Breast epithelium (tissue), 4 donors: ENCODE measurements at regions of chr16 and their contacts with region 1.

Region 1: GRCh38 chr16:49116873-49117272 is 164.8 kb downstream of the CBLN1 start:
- DNase-seq: no peak
- H3K4me3 ChIP-seq: no peak overlapping the region
- H3K27ac ChIP-seq: no peak overlapping the region
- H3K4me1 ChIP-seq: no peaks in the 10 kb centered on the region
- H3K27me3 ChIP-seq: no peaks in the 10 kb centered on the region
- CTCF ChIP-seq: no peak
- POLR2A ChIP-seq: no peak

Region 2: DNA sequence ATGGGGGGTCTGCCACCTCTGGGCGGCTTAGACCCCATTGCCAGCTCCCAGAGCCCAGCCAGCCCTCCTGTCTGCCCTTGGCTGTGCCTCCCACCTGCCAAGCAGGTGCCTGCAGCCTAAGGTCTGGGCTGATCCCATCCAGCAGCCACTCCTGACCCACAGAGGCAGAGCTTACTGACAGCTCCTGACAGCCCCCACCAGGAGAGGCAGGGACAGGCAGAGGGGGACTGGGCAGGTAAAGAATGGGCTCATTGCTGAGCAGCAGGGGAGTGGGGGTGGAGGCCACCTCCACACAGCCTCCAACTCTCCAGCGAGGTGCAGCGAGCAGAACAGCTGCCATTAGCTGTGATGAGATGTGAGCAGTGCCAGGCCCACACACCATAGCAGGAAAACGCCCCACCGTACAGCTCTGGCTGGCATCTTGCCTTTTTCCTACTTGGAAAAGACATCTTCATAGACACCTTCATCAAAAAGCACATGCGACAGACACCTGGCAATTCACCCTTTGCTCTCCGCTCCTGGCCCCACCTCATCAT is 421.1 kb after region 1 on chr16:
- intact Hi-C with region 1: loop called (anchors 5 kb)
- DNase-seq: no peak
- H3K4me3 ChIP-seq: no peak overlapping the region
- H3K27ac ChIP-seq: no peak overlapping the region
- H3K4me1 ChIP-seq: no peaks in the 10 kb centered on the region
- H3K27me3 ChIP-seq: no peaks in the 10 kb centered on the region
- CTCF ChIP-seq: no peak
- POLR2A ChIP-seq: no peak